Endothelial cell of umbilical vein (primary cell): ENCODE measurements at regions of chr1 and their contacts with region 1.

Region 1: DNA sequence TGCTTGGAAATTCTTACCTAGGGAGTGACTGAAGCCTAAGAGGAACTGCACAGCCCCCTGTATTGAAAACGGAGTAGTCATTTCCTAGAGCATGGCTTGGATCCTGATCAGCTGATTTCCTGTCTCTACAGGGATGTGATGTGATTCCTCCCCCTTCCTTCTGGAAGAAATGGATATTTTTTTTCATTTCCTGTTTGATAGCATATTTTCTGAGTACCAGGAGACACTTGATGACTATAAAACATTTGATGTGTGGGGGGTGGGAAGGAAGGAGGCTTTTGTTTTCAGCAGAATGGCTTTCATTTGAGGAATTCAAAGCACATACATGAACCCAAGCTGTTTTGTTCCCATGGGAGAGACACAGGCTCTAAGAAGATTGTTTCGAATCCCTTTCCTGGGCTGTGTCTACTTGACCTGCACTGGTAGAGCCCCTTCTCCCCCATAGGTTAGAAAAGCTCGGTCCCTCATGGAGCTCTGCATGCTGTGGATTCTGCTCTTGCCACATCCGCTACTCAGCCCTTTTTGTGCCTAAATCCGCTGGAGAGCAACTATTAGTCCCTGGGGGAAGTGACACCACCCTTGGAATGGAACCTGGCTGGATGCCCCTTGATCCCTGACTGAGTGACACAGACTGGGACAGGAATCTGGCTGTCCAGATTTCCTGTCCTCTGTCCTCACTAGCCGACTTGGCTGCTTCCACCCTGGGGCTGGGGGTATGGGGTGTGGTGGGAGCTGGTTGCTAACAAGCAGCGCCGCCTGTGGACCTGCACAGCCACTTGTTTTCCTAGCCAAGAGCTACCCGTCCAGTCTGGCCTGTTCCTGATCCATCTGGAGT is 71.8 kb upstream of the MACF1 start:
- DNase-seq: peak; percentile 97
- H3K4me3 ChIP-seq: peak overlapping the region in 1 of 3 experiments; percentile 38
- H3K27ac ChIP-seq: peak overlapping the region; percentile 98
- H3K4me1 ChIP-seq: peaks cover 68% of the 10 kb centered on the region
- H3K27me3 ChIP-seq: no peaks in the 10 kb centered on the region
- CTCF ChIP-seq: peak; percentile 68 to 75
- POLR2A ChIP-seq: peak; percentile 32

Region 2: DNA sequence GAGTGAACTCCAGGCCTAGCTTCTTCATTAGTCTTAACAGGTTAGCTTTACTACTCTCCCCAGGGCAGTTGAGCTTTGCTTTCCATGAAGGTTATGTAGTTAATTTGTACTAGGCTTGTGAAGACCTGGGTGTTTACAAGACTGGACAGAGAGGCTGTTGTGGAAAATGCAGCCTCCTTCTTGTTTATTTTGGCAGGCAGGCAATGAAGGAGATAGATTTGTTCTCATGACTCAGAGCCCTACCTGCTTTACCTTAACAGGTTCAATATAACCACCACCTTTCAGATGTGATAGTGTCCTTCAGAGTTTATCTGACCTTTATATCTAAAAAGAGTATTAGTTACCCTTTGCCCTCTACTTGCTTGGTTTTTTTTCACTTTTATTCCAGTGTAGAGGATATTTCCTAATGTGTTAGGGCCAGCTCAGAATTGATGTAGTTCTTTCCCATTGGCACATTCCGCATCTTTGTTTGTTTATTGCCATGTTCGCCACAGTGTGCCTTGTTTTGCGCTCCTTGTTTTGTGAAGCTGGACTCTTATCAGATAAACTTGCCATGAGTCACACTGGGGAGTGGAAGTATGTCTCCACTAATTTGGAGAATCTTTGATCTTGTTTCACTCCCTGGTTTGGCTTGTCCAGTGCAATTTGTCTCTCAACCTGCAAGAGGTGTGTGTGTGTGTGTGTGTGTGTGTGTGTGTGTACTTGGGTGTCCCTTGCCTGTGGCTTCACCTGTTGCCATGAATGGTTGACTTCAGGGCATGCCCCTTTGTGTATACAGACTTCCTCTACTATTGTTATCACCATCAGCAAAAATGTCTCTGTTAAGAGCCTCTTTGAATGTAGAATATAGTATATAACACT is 15.6 kb before region 1 on chr1:
- CTCF ChIA-PET with region 1: interaction called, 82 read pairs
- POLR2A ChIA-PET with region 1: no interaction called
- dilution Hi-C with region 1: no loop called
- intact Hi-C with region 1: loop called (anchors 1 kb)
- DNase-seq: peak; percentile 69
- H3K4me3 ChIP-seq: peak overlapping the region in 1 of 3 experiments; percentile 22
- H3K27ac ChIP-seq: peak overlapping the region; percentile 40
- H3K4me1 ChIP-seq: peaks cover 45% of the 10 kb centered on the region
- H3K27me3 ChIP-seq: no peaks in the 10 kb centered on the region
- CTCF ChIP-seq: no peak
- POLR2A ChIP-seq: no peak

Region 3: GRCh38 chr1:39158327-39159086 is 25.8 kb after region 1 on chr1:
- CTCF ChIA-PET with region 1: interaction called, 25 read pairs
- POLR2A ChIA-PET with region 1: no interaction called
- dilution Hi-C with region 1: no loop called
- intact Hi-C with region 1: loop called (anchors 1 kb)
- DNase-seq: no peak
- H3K4me3 ChIP-seq: no peak overlapping the region
- H3K27ac ChIP-seq: peak overlapping the region; percentile 80
- H3K4me1 ChIP-seq: peaks cover 64% of the 10 kb centered on the region
- H3K27me3 ChIP-seq: no peaks in the 10 kb centered on the region
- CTCF ChIP-seq: no peak
- POLR2A ChIP-seq: no peak

Region 4: GRCh38 chr1:39183503-39184353 is 51.0 kb after region 1 on chr1:
- CTCF ChIA-PET with region 1: interaction called, 310 read pairs
- POLR2A ChIA-PET with region 1: interaction called, 6 read pairs
- dilution Hi-C with region 1: no loop called
- intact Hi-C with region 1: loop called (anchors 1 kb)
- DNase-seq: peak; percentile 91
- H3K4me3 ChIP-seq: no peak overlapping the region
- H3K27ac ChIP-seq: peak overlapping the region; percentile 95
- H3K4me1 ChIP-seq: peaks cover 70% of the 10 kb centered on the region
- H3K27me3 ChIP-seq: no peaks in the 10 kb centered on the region
- CTCF ChIP-seq: peak; percentile 48 to 50
- POLR2A ChIP-seq: peak; percentile 16

Region 5: GRCh38 chr1:39258146-39258924 is 125.6 kb after region 1 on chr1:
- CTCF ChIA-PET with region 1: interaction called, 17 read pairs
- POLR2A ChIA-PET with region 1: interaction called, 3 read pairs
- dilution Hi-C with region 1: no loop called
- intact Hi-C with region 1: loop called (anchors 1 kb)
- DNase-seq: peak; percentile 75
- H3K4me3 ChIP-seq: no peak overlapping the region
- H3K27ac ChIP-seq: no peak overlapping the region
- H3K4me1 ChIP-seq: no peaks in the 10 kb centered on the region
- H3K27me3 ChIP-seq: no peaks in the 10 kb centered on the region
- CTCF ChIP-seq: peak; percentile 70 to 71
- POLR2A ChIP-seq: no peak

Region 6: DNA sequence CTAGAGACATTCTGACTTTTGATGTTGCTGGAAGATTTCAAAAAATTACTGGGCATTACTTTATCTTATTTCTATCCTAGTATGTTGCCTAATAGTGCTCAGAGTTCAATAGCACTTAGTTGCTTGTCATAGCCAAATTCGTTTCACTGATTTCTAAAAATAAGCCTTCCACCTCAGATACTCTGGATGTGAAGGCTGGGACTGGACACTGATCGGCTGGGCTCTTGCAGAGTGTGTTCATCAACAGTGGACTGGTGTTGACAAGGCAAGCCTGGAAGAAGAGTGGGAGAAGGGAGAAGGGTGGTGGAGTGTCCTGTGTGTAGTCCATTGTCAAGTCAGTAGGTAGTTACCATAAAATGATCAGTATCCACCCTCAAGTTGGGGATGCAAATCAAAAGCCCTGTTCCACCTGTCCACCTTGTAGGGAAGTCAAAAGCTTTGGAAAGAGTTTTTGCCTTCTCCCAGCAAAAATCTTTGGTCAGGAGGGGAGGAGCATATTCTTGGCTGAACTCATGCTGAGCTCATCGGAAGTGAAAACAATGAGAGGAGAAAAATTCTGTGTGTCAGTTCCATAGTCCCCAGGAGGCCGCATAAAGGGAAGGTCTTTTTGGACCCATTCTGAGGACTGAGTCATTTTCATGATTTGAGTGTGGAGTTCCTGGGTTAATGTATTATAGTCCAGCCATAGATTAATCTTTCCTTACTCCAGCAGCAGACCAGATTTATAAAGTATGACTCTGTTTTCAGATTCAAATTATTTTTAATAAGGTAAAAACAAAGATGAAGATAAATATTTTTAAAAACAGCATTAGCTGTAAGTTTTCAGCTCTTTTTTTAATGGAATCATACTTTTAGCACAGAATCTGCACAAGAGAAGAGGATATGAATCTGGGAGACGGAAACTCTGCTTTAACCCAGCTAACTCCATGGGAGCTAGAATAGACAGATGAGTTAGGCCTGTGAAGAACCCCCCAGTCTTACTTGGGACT is 259.3 kb after region 1 on chr1:
- CTCF ChIA-PET with region 1: no interaction called
- POLR2A ChIA-PET with region 1: interaction called, 4 read pairs
- dilution Hi-C with region 1: no loop called
- intact Hi-C with region 1: loop called (anchors 1 kb)
- DNase-seq: peak; percentile 93
- H3K4me3 ChIP-seq: peak overlapping the region in 1 of 3 experiments; percentile 57
- H3K27ac ChIP-seq: peak overlapping the region; percentile 99
- H3K4me1 ChIP-seq: peaks cover 78% of the 10 kb centered on the region
- H3K27me3 ChIP-seq: no peaks in the 10 kb centered on the region
- CTCF ChIP-seq: no peak
- POLR2A ChIP-seq: peak; percentile 36